ENCODE measurements at regions of chr20 and their contacts with region 1.

Region 1: DNA sequence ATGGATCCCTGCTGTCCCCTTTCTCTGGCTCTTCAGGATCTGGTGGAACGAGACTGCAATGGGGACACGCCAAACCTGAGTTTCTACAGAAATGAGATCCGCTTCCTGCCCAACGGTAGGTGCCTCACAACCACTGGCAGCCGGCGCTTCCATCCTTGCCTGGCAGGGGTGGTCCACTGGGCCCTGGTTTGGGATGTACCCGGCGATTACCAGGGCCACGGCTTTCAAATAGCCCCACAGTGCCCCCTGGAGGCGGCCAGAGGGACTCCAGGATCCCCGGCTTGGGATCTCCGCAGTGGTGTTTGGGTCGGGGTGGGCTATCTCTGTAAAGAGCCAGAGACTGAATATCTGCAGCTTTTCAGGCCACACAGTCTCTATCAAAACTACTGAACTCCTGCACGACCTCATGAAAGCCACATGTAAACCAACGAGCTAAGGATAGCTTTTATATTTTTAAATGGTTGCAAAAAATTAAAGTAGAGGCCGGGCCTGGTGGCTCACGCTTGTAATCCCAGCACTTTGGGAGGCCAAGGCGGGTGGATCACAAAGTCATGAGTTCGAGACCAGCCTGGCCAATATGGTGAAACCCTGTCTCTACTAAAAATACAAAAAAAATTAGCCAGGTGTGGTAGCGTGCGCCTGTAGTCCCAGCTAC is 3.7 kb downstream of the OGFR start:
- DNase-seq: peak; percentile 58 to 87 (median 78)
- ATAC-seq: peak; percentile 49
- H3K4me3 ChIP-seq: no peak overlapping the region
- H3K4me3 Mint-ChIP-seq: peak overlapping the region; percentile 50
- H3K27ac ChIP-seq: no peak overlapping the region
- H3K27ac Mint-ChIP-seq: peak overlapping the region; percentile 60
- H3K4me1 ChIP-seq: peaks cover 37% of the 10 kb centered on the region
- H3K4me1 Mint-ChIP-seq: peaks cover 29% of the 10 kb centered on the region
- H3K27me3 ChIP-seq: no peaks in the 10 kb centered on the region
- H3K27me3 Mint-ChIP-seq: no peaks in the 10 kb centered on the region
- CTCF ChIP-seq: peak; percentile 95

Region 2: GRCh38 chr20:62407221-62407992 is 400.9 kb before region 1 on chr20 and contains the start of gene CABLES2:
- CTCF ChIA-PET with region 1: no interaction called
- POLR2A ChIA-PET with region 1: no interaction called
- intact Hi-C with region 1: loop called in 1 of 2 experiments (anchors 2 kb)
- DNase-seq: peak; percentile 79 to 96 (median 90)
- ATAC-seq: peak; percentile 96
- H3K4me3 ChIP-seq: peak within 1 kb of the TSS; percentile 65 to 72
- H3K4me3 Mint-ChIP-seq: peak within 1 kb of the TSS; percentile 74
- H3K27ac ChIP-seq: peak within 1 kb of the TSS; percentile 33 to 54
- H3K27ac Mint-ChIP-seq: peak within 1 kb of the TSS; percentile 18
- H3K4me1 ChIP-seq: peaks cover 22% of the 10 kb centered on the region
- H3K4me1 Mint-ChIP-seq: peaks cover 26% of the 10 kb centered on the region
- H3K27me3 ChIP-seq: no peaks in the 10 kb centered on the region
- H3K27me3 Mint-ChIP-seq: no peaks in the 10 kb centered on the region
- CTCF ChIP-seq: no peak
- total RNA-seq, gene CABLES2: 4.5 to 5.1 TPM

Region 3: GRCh38 chr20:62616728-62617621 is 191.4 kb before region 1 on chr20:
- CTCF ChIA-PET with region 1: interaction called, 12 read pairs
- POLR2A ChIA-PET with region 1: no interaction called
- intact Hi-C with region 1: loop called (anchors 1 to 2 kb)
- DNase-seq: peak; percentile 44 to 82 (median 68)
- ATAC-seq: peak; percentile 86
- H3K4me3 ChIP-seq: no peak overlapping the region
- H3K4me3 Mint-ChIP-seq: no peak overlapping the region
- H3K27ac ChIP-seq: no peak overlapping the region
- H3K27ac Mint-ChIP-seq: peak overlapping the region; percentile 41
- H3K4me1 ChIP-seq: peaks cover 26% of the 10 kb centered on the region
- H3K4me1 Mint-ChIP-seq: peaks cover 22% of the 10 kb centered on the region
- H3K27me3 ChIP-seq: no peaks in the 10 kb centered on the region
- H3K27me3 Mint-ChIP-seq: no peaks in the 10 kb centered on the region
- CTCF ChIP-seq: peak; percentile 82

Region 4: GRCh38 chr20:62702886-62703854 is 105.2 kb before region 1 on chr20:
- CTCF ChIA-PET with region 1: interaction called, 5 read pairs
- POLR2A ChIA-PET with region 1: no interaction called
- intact Hi-C with region 1: loop called in 1 of 2 experiments (anchors 1 kb)
- DNase-seq: peak in 3 of 9 experiments; percentile 27 to 51 (median 27)
- ATAC-seq: peak; percentile 62
- H3K4me3 ChIP-seq: no peak overlapping the region
- H3K4me3 Mint-ChIP-seq: no peak overlapping the region
- H3K27ac ChIP-seq: no peak overlapping the region
- H3K27ac Mint-ChIP-seq: peak overlapping the region; percentile 62
- H3K4me1 ChIP-seq: no peaks in the 10 kb centered on the region
- H3K4me1 Mint-ChIP-seq: peaks cover 5% of the 10 kb centered on the region
- H3K27me3 ChIP-seq: peaks cover 2 to 5% of the 10 kb centered on the region in 2 experiments
- H3K27me3 Mint-ChIP-seq: peaks cover 12% of the 10 kb centered on the region
- CTCF ChIP-seq: no peak

Region 5: DNA sequence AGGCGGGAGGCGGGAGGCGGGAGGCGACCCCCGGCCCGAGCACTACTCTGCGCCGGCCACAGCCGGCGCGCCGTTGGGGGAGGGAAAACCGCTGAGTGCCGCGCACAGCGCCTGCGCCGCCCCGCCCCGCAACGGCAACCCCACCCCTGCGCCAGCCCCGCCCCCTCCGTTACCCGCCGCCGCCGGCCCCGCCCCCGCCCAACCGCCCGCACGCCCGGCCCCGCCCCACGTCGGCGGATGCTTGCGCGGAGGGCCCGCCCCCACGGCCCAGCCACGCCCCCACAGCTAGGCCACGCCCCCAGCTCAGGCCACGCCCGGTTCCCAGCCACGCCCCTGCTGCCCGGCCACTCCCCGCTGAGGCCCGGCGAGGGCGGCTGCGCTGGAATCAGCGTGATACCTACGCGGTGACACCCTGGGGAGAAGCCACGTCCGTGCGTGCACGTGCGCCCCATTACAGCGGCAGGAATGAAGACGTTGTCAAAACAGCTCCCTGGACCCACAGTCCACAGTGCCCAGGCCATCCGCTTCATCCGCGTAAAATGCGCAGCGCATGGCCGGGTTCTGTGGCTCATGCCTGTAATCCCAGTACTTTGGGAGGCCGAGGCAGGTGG is 53.5 kb after region 1 on chr20 and contains the start of gene TCFL5:
- CTCF ChIA-PET with region 1: interaction called, 4 read pairs
- POLR2A ChIA-PET with region 1: no interaction called
- intact Hi-C with region 1: loop called (anchors 2 to 5 kb)
- DNase-seq: peak; percentile 88 to 99 (median 93)
- ATAC-seq: peak; percentile 90
- H3K4me3 ChIP-seq: peak within 1 kb of the TSS; percentile 20 to 26
- H3K4me3 Mint-ChIP-seq: peak within 1 kb of the TSS; percentile 77
- H3K27ac ChIP-seq: peak within 1 kb of the TSS in 1 of 2 experiments; percentile 56
- H3K27ac Mint-ChIP-seq: peak within 1 kb of the TSS; percentile 88
- H3K4me1 ChIP-seq: peaks cover 15% of the 10 kb centered on the region
- H3K4me1 Mint-ChIP-seq: peaks cover 20% of the 10 kb centered on the region
- H3K27me3 ChIP-seq: no peaks in the 10 kb centered on the region
- H3K27me3 Mint-ChIP-seq: no peaks in the 10 kb centered on the region
- CTCF ChIP-seq: no peak
- total RNA-seq, gene TCFL5: 4.3 to 4.8 TPM

Region 6: DNA sequence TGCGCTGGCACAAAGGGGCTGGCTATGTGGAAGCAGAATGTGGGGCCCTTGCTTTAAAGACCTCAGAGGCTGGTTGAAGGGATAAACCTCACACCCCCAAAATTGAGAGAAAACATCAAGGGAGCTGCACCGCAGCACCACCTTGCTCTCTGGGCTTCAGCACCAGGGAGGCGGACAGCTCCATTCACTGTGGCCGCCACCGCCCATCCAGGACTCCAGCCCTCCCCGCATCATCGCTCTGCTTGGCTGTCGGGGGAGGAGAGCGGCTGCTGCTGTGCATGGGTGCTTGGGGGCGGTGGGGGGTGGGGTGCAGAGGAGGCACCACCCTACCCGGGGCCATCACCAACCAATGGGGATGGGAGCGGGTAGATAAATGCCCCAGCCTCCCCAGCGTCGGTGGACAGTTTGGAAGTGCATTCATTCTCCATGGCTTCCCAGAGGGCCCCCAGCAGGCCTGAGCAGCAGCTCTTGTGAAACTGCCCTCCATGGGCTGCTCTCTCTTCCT is 274.0 kb after region 1 on chr20:
- CTCF ChIA-PET with region 1: no interaction called
- POLR2A ChIA-PET with region 1: no interaction called
- intact Hi-C with region 1: no loop called
- DNase-seq: peak in 5 of 9 experiments; percentile 27 to 49 (median 40)
- ATAC-seq: peak; percentile 71
- H3K4me3 ChIP-seq: no peak overlapping the region
- H3K4me3 Mint-ChIP-seq: no peak overlapping the region
- H3K27ac ChIP-seq: no peak overlapping the region
- H3K27ac Mint-ChIP-seq: no peak overlapping the region
- H3K4me1 ChIP-seq: no peaks in the 10 kb centered on the region
- H3K4me1 Mint-ChIP-seq: no peaks in the 10 kb centered on the region
- H3K27me3 ChIP-seq: peaks cover 0 to 2% of the 10 kb centered on the region in 2 experiments
- H3K27me3 Mint-ChIP-seq: peaks cover 21% of the 10 kb centered on the region
- CTCF ChIP-seq: no peak